Sigmoid colon (tissue), 7 donors: ENCODE measurements at regions of chrX and their contacts with region 1.

Region 1: DNA sequence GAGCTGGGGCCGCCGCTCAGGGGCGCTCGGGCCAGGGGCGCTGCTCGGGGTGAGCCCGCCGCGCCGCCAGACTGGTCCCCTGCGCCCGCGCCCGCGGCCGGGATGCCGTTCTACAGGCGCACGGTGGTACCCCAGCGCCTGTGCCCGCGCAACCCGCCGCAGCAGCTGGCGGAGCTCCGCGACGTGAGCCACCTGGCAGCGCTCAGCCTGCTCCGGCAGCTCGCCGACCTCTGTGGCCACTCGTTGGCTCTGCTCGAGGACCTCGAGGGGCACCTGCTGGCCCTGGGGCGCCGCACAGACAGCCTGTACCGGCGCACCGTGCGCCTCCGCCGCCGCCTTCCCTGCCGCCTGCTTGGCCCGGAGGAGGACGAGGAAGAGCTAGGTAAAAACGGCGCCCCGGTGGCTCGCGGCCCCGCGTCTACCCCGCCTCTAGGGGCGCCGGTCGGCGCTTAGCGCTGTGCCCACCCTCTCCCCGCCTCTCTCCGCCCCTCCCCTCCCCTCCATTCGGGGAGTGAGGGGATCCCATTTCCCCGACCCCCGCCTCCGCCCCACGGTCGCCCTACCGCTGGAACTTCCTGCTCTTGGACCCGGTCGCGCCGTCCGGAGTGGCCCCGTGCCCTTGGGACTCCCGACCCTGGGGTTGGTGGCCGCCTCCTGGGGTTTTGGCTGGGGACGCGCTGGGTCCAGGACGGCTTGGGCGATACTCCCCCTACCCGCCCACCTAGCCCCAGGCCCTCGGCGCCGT is 513 bp downstream of the NHSL2 start:
- DNase-seq: peak; percentile 67
- H3K4me3 ChIP-seq: peak overlapping the region; percentile 49 to 63 (median 60)
- H3K27ac ChIP-seq: peak overlapping the region; percentile 59 to 82 (median 79)
- H3K4me1 ChIP-seq: no peaks in the 10 kb centered on the region
- H3K27me3 ChIP-seq: peaks cover 0 to 3% (median 0%) of the 10 kb centered on the region in 3 donors
- CTCF ChIP-seq: peak in 1 of 4 experiments; percentile 37
- EP300 ChIP-seq: no peak
- POLR2A ChIP-seq: no peak

Region 2: GRCh38 chrX:71949844-71950445 is 38.8 kb after region 1 on chrX:
- intact Hi-C with region 1: loop called (anchors 5 kb)
- DNase-seq: no peak
- H3K4me3 ChIP-seq: no peak overlapping the region
- H3K27ac ChIP-seq: no peak overlapping the region
- H3K4me1 ChIP-seq: peaks cover 0 to 41% (median 28%) of the 10 kb centered on the region in 4 donors
- H3K27me3 ChIP-seq: no peaks in the 10 kb centered on the region
- CTCF ChIP-seq: no peak
- EP300 ChIP-seq: no peak
- POLR2A ChIP-seq: no peak

Region 3: DNA sequence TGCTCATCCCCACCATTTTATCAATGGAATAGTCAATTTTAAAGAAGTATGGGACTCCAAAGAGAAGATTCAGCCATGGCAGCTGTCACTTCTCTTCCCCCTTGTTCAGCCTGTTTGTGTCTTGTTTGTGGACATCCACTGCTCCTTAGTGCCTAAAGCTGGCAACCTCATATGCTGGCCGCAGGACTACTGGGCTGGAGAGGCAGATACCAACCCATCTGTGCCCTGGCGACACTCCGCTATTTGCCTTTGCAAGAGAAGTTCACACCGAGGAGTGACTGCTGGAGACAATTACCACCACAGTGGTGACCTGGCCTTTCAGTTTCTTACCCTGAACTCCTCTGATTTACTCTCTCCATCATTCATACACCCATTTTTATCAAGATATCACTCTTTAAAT is 63.8 kb after region 1 on chrX:
- intact Hi-C with region 1: no loop called
- DNase-seq: no peak
- H3K4me3 ChIP-seq: no peak overlapping the region
- H3K27ac ChIP-seq: no peak overlapping the region
- H3K4me1 ChIP-seq: peaks cover 0 to 5% (median 0%) of the 10 kb centered on the region in 4 donors
- H3K27me3 ChIP-seq: no peaks in the 10 kb centered on the region
- CTCF ChIP-seq: no peak
- EP300 ChIP-seq: no peak
- POLR2A ChIP-seq: no peak

Region 4: DNA sequence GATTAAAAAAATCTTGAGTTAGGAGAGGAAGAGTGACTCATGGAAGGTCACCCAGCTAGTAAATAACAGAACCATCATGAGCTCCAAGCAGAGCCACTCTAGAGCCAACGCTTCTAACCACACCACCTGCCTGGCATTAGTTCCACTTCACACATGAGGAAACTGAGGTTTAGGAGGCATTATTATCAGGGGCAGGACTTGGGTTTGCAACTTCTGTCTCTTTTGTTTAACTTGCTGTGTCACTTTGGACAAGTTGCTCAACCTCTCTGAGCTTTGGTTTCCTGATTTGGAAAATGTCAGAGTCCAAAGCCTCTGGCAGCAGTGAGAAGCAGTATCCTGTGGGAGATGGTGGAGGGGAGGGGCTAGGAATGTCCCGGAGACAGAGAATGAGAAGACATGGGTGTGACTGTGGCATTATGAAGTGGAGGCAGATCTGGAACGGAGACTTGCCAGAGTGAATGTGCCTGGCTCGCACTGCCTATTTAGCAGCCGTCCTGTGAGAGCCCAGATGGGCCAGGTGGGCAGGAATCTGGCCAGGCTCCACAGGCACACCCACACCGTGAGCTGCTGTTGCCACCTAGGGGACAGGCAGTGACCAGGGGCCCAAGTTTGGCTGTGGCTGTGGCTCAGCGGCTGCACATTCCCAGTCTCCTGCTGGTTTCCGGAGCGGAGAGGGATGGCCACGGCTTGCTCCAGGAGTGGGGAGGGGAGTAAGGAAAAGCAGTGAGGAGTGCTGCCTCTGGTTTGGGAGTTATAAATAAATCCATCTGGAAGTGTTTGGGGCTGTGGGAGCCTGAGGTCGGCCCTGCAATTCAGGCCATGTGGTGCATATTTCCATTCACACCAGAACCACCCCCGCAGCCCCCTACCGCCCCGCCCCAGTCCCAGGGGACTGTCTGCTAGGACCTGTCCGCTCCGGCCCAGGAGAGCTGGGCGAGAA is 92.9 kb after region 1 on chrX:
- intact Hi-C with region 1: loop called (anchors 5 kb)
- DNase-seq: peak; percentile 74
- H3K4me3 ChIP-seq: no peak overlapping the region
- H3K27ac ChIP-seq: peak overlapping the region; percentile 23 to 70 (median 53)
- H3K4me1 ChIP-seq: peaks cover 0 to 12% (median 8%) of the 10 kb centered on the region in 4 donors
- H3K27me3 ChIP-seq: no peaks in the 10 kb centered on the region
- CTCF ChIP-seq: no peak
- EP300 ChIP-seq: no peak
- POLR2A ChIP-seq: no peak

Region 5: DNA sequence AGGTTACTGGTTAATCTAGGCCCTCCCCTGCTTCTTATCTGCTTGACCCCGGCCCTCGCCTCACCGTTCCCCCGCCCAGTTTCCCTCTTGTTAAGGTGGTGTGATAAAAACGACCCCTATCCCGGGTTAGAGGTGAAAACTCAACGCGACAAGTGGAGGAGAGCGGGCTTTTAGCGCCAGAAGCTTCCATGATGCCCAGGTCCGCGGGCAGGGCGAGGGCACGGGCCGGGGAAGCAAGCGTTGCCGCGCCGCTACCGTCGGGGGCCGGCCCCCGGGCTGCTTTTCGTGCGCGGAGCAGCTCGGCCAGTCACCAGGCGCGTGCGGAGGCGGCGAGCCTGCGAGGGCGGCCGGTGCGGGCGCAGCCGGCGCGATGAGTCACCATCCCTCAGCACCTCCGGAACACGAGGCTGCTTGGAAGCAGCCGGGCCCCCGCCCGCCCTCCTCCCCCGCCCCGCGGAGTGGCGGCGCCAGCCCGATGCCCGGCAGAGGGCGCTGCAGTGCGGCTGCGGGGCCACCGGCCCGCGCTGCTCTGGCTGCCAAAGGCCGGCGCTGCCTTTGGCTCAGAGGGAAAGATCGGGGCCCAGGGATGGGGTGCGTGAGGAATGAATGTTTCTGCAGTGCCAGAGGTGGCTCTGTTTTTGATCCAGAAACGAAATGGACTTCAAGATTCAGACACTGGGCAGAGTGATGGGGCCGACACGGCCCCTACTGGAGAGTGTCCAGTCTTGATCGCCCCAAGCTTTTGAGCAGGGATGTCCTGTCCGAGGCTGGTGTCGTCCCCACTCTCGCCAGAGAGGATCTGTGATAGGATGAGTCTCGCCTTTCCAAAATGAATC is 107.3 kb after region 1 on chrX:
- intact Hi-C with region 1: loop called (anchors 1 kb)
- DNase-seq: peak; percentile 94
- H3K4me3 ChIP-seq: peak overlapping the region in 3 of 4 donors; percentile 24 to 40 (median 25)
- H3K27ac ChIP-seq: peak overlapping the region; percentile 72 to 82 (median 78)
- H3K4me1 ChIP-seq: peaks cover 0 to 31% (median 18%) of the 10 kb centered on the region in 4 donors
- H3K27me3 ChIP-seq: no peaks in the 10 kb centered on the region
- CTCF ChIP-seq: peak in 2 of 4 experiments; percentile 24 to 74
- EP300 ChIP-seq: peak in 1 of 4 donors; percentile 25
- POLR2A ChIP-seq: no peak

Region 6: GRCh38 chrX:72126539-72127140 is 215.5 kb after region 1 on chrX:
- intact Hi-C with region 1: loop called (anchors 5 kb)
- DNase-seq: peak; percentile 92
- H3K4me3 ChIP-seq: no peak overlapping the region
- H3K27ac ChIP-seq: peak overlapping the region; percentile 70 to 79 (median 76)
- H3K4me1 ChIP-seq: peaks cover 0 to 65% (median 45%) of the 10 kb centered on the region in 4 donors
- H3K27me3 ChIP-seq: peaks cover 0 to 3% (median 0%) of the 10 kb centered on the region in 3 donors
- CTCF ChIP-seq: peak; percentile 57 to 76 (median 72)
- EP300 ChIP-seq: no peak
- POLR2A ChIP-seq: no peak